ENCODE measurements at regions of chr15 and their contacts with region 1.

Region 1: DNA sequence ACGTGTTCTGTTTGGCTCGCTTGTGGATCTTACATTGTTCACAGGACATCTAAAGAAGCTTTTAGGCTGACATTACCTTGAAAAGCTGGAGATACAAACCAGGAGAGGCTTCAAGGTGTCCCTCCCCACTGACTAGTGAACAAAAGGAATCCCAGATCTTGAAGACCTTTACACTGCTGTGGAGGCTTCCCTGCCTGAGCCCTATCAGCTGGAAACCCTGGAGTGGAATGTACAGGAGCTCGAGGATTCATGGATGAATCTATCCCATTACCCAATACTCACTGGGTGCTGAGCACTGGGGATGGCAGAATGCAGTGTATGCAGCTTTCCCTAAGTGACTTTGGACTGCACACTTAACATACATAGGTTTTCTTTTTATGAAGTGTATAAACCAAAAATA is 82.3 kb upstream of the MFGE8 start:
- DNase-seq: no peak
- H3K4me3 ChIP-seq: no peak overlapping the region
- H3K27ac ChIP-seq: no peak overlapping the region
- H3K4me1 ChIP-seq: no peaks in the 10 kb centered on the region
- H3K27me3 ChIP-seq: no peaks in the 10 kb centered on the region
- CTCF ChIP-seq: no peak
- POLR2A ChIP-seq: no peak

Region 2: DNA sequence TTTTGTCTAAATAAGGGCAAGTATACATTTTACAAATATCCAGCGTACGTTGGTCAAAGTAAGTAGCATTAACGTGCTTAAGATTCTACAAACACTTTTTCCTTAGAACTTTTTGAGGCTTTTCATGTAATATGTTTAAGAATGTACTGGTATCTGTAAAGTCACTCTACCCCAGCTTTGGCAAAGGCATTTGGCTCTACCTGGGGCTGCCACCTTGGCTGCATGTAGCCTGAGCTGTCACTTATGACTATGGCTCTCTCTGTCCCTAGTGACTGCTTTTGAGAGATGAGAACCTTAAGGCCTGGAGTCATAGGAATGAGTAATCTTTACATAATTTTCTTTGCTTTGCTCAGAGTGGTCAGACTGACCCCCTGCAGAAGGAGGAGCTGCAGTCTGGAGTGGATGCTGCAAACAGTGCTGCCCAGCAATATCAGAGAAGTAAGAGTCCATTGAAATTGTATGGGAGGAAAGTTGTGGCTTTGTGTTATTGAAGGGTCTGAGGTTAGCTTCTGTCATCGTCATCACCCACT is 1453.8 kb after region 1 on chr15:
- intact Hi-C with region 1: loop called (anchors 10 kb)
- DNase-seq: no peak
- H3K4me3 ChIP-seq: no peak overlapping the region
- H3K27ac ChIP-seq: no peak overlapping the region
- H3K4me1 ChIP-seq: no peaks in the 10 kb centered on the region
- H3K27me3 ChIP-seq: no peaks in the 10 kb centered on the region
- CTCF ChIP-seq: no peak
- POLR2A ChIP-seq: no peak